Sigmoid colon (tissue), 7 donors: ENCODE measurements at regions of chr6 and their contacts with region 1.

Region 1: DNA sequence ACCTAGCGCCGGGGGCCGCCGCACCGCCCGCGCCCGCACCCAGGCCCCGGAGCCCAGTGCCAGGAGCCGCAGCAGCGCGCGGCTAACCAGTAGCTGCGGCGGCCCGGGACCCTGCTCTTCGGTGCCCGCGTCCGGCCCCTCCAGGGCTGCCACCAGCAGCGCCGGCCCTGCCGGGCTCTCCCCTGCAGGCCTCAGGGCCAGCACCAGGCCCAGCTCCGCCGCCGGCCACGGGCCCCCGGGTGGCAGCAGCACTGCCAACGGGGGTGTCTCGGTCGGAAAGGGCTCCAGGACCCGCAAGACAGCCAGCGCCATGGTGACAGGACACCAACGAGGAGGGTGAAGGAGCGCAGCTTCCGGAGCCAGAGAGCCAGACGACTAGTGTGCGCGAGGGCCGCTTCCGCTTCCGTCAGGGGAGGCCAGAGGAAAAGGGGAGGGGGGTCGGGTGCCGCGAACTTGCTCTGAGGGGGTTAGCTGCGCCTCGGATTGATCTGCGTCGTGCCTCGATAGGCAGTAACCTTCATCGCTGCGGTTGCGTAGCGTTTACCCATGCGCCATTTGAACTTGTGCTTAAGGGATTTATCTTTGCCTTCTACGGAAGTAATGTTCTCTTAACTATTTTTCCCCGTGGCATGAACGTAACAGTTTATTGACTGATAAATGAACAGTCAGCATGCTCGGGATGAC is at the start of gene PEX6:
- DNase-seq: peak; percentile 93
- H3K4me3 ChIP-seq: peak within 1 kb of the TSS; percentile 82 to 99 (median 90)
- H3K27ac ChIP-seq: peak within 1 kb of the TSS; percentile 91 to 93 (median 93)
- H3K4me1 ChIP-seq: peaks cover 0 to 41% (median 35%) of the 10 kb centered on the region in 4 donors
- H3K27me3 ChIP-seq: no peaks in the 10 kb centered on the region
- CTCF ChIP-seq: no peak
- EP300 ChIP-seq: no peak
- POLR2A ChIP-seq: peak; percentile 43 to 66
- total RNA-seq, gene PEX6: 10.2 to 19.1 (median 18.2) TPM

Region 2: GRCh38 chr6:42879372-42880239 is 99.4 kb before region 1 on chr6 and contains the start of gene RPL7L1:
- intact Hi-C with region 1: no loop called
- DNase-seq: peak; percentile 93
- H3K4me3 ChIP-seq: peak within 1 kb of the TSS; percentile 54 to 71 (median 60)
- H3K27ac ChIP-seq: peak within 1 kb of the TSS; percentile 87 to 92 (median 92)
- H3K4me1 ChIP-seq: peaks cover 0 to 40% (median 22%) of the 10 kb centered on the region in 4 donors
- H3K27me3 ChIP-seq: no peaks in the 10 kb centered on the region
- CTCF ChIP-seq: peak in 1 of 4 experiments; percentile 29
- EP300 ChIP-seq: no peak
- POLR2A ChIP-seq: peak in 1 of 2 donors; percentile 54
- total RNA-seq, gene RPL7L1: 67.6 to 79.0 (median 75.7) TPM

Region 3: GRCh38 chr6:42928986-42929820 is 49.8 kb before region 1 on chr6 and contains the start of gene CNPY3:
- intact Hi-C with region 1: loop called (anchors 2 kb)
- DNase-seq: peak; percentile 98
- H3K4me3 ChIP-seq: peak within 1 kb of the TSS; percentile 72 to 85 (median 74)
- H3K27ac ChIP-seq: peak within 1 kb of the TSS; percentile 88 to 93 (median 90)
- H3K4me1 ChIP-seq: peaks cover 0 to 38% (median 34%) of the 10 kb centered on the region in 4 donors
- H3K27me3 ChIP-seq: peaks cover 0 to 8% (median 3%) of the 10 kb centered on the region in 3 donors
- CTCF ChIP-seq: no peak
- EP300 ChIP-seq: no peak
- POLR2A ChIP-seq: peak; percentile 33 to 47
- total RNA-seq, gene CNPY3: 22.8 to 24.9 (median 24.1) TPM

Region 4: GRCh38 chr6:43170417-43171283 is 191.7 kb after region 1 on chr6 and contains the start of gene SRF:
- intact Hi-C with region 1: no loop called
- DNase-seq: peak; percentile 100
- H3K4me3 ChIP-seq: peak within 1 kb of the TSS; percentile 88 to 98 (median 95)
- H3K27ac ChIP-seq: peak within 1 kb of the TSS; percentile 99 to 100 (median 100)
- H3K4me1 ChIP-seq: peaks cover 0 to 34% (median 31%) of the 10 kb centered on the region in 4 donors
- H3K27me3 ChIP-seq: no peaks in the 10 kb centered on the region
- CTCF ChIP-seq: no peak
- EP300 ChIP-seq: peak in 1 of 4 donors; percentile 60
- POLR2A ChIP-seq: peak; percentile 72 to 76
- total RNA-seq, gene SRF: 64.2 to 96.9 (median 89.1) TPM